Motor neuron (in vitro differentiated cells): ENCODE measurements at regions of chr7 and their contacts with region 1.

Region 1: GRCh38 chr7:25069900-25070443 is 55.1 kb downstream of the CYCS start:
- ATAC-seq: peak; percentile 82 to 95 (median 88)
- H3K4me3 ChIP-seq: no peak overlapping the region
- H3K27ac ChIP-seq: no peak overlapping the region
- H3K4me1 ChIP-seq: peaks cover 0 to 2% of the 10 kb centered on the region in 2 donors

Region 2: DNA sequence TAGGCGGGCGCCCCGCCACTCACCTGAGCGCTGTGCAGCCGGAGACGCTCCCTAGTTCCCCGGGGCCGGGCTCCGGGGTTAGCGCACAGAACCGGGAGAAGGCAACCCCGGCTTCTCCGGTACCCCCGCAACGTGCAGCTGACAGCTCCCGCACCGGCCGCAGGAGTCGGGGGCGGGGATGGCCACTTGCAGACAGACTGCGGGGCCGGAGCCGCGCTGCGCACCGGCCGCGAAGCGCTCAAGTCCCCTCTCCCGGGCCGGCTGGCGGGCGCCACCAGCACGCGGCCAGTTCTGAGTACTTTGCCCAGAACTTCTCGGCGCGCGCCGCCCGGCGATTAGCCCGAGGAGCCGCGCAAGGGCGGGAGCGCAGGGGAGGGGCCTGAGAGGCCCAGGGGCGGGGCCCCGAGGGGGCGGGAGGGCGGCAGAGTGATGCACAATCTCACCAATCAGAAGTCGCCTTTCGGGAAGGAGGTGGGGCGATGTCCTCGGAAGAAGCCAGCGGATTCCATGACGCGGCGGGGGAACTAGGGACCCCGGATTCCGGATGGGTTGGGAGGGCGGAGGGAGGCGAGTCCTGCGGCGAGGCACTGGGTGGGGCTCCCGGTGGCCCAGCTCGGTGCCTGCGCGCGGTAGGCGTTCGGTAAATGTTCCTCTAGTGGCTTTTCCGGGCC is 90.0 kb before region 1 on chr7 and contains the start of gene OSBPL3:
- in situ Hi-C with region 1: loop called in 2 of 9 experiments (anchors 10 to 25 kb)
- ATAC-seq: peak; percentile 57 to 88 (median 80)
- H3K4me3 ChIP-seq: peak within 1 kb of the TSS; percentile 49 to 85 (median 56)
- H3K27ac ChIP-seq: peak within 1 kb of the TSS; percentile 16 to 35
- H3K4me1 ChIP-seq: peaks cover 0 to 7% of the 10 kb centered on the region in 2 donors
- total RNA-seq, gene OSBPL3: 1.8 to 139 (median 7.5) TPM